ENCODE measurements at regions of chr2 and their contacts with region 1.

Region 1: GRCh38 chr2:227519036-227519292 is 47.0 kb downstream of the AGFG1 start:
- DNase-seq: no peak
- H3K4me3 ChIP-seq: no peak overlapping the region
- H3K27ac ChIP-seq: no peak overlapping the region
- H3K4me1 ChIP-seq: peaks cover 12% of the 10 kb centered on the region
- H3K27me3 ChIP-seq: no peaks in the 10 kb centered on the region
- CTCF ChIP-seq: no peak

Region 2: GRCh38 chr2:227436436-227437174 is 82.4 kb before region 1 on chr2:
- CTCF ChIA-PET with region 1: no interaction called
- POLR2A ChIA-PET with region 1: no interaction called
- intact Hi-C with region 1: no loop called
- DNase-seq: no peak
- H3K4me3 ChIP-seq: no peak overlapping the region
- H3K27ac ChIP-seq: no peak overlapping the region
- H3K4me1 ChIP-seq: no peaks in the 10 kb centered on the region
- H3K27me3 ChIP-seq: no peaks in the 10 kb centered on the region
- CTCF ChIP-seq: no peak

Region 3: DNA sequence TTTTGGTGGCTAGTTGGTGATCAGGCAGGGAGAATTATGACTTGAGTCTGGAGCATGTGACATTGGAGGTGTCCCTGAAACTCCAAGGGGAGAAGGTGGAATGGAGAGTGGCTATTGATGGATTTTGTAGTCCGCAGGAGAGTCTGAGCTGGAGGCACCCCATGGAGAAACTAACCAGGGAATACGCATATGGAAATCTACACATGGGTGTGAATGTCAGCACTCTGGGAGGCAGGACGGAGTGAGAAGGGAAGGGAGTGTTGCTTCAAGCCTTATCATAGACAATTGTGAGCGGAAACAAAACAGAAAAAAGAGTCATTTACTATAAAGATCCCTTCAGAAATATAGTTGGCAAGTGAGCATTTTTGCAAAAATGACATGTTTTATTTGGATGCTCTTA is 97.7 kb after region 1 on chr2:
- CTCF ChIA-PET with region 1: no interaction called
- POLR2A ChIA-PET with region 1: interaction called, 16 read pairs
- intact Hi-C with region 1: no loop called
- DNase-seq: no peak
- H3K4me3 ChIP-seq: no peak overlapping the region
- H3K27ac ChIP-seq: no peak overlapping the region
- H3K4me1 ChIP-seq: no peaks in the 10 kb centered on the region
- H3K27me3 ChIP-seq: no peaks in the 10 kb centered on the region
- CTCF ChIP-seq: no peak

Region 4: DNA sequence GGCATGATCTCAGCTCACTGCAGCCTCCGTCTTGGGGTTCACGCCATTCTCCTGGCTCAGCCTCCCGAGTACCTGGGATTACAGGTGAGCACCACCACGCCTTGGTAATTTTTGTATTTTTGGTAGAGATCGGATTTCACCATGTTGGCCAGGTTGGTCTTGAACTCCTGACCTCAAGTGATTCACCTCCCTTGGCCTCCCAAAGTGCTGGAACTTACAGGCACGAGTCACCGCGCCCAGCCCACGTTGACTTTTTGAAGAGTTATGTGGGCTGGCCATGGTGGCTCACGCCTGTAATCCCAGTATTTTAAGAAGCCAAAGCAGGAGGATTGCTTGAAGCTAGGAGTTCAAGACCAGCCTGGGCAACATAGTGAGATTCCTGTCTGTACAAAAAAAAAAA is 315.5 kb after region 1 on chr2:
- CTCF ChIA-PET with region 1: no interaction called
- POLR2A ChIA-PET with region 1: no interaction called
- intact Hi-C with region 1: no loop called
- DNase-seq: no peak
- H3K4me3 ChIP-seq: no peak overlapping the region
- H3K27ac ChIP-seq: no peak overlapping the region
- H3K4me1 ChIP-seq: no peaks in the 10 kb centered on the region
- H3K27me3 ChIP-seq: no peaks in the 10 kb centered on the region
- CTCF ChIP-seq: no peak

Region 5: GRCh38 chr2:227856697-227857096 is 337.7 kb after region 1 on chr2:
- CTCF ChIA-PET with region 1: interaction called, 16 read pairs
- POLR2A ChIA-PET with region 1: no interaction called
- intact Hi-C with region 1: no loop called
- DNase-seq: no peak
- H3K4me3 ChIP-seq: no peak overlapping the region
- H3K27ac ChIP-seq: no peak overlapping the region
- H3K4me1 ChIP-seq: peaks cover 6% of the 10 kb centered on the region
- H3K27me3 ChIP-seq: no peaks in the 10 kb centered on the region
- CTCF ChIP-seq: no peak